ENCODE measurements at regions of chr10 and their contacts with region 1.

Region 1: GRCh38 chr10:86366033-86366901 is at the start of gene GRID1:
- DNase-seq: peak; percentile 48 to 83
- H3K4me3 ChIP-seq: peak within 1 kb of the TSS; percentile 45
- H3K4me1 ChIP-seq: 0 out of 2 replicates have a peak, but pooled peaks cover 2% of the 10 kb centered on the region
- H3K27me3 ChIP-seq: no peaks in the 10 kb centered on the region

Region 2: DNA sequence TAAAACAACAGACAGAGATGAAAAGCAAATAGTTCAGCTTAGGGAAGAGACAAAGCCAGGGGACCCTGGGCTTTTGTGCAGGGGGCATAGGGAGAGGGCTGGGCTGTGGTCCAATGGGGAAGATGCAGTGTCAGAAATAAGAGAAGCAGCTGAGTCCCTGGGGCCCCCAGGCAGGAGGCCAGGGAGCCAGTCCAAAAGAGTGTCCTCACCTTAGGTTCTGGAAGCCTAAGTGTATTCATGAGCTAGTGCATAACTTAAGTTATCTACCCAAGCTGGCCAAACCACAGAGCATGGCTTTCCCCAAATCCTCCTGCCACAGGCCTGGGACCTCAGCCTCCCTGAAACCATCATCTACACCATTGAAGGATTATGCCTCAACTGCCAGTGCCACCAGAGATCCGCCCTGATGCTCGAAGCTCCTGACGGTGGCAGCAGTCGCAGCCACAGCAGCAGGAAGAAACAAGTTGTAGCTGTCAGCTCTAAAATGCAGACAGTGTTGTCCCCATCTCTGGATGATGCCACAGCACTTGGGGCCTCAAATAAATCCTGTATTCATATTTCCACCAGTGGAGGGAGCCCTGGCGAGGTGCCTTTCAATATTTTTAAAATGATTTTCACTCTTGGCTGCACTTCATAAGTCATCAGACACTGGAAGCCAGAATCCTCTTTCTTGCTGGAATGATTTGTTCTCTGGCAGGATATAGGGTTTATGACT is 574.3 kb before region 1 on chr10:
- in situ Hi-C with region 1: loop called (anchors 25 kb)
- DNase-seq: no peak
- H3K4me3 ChIP-seq: no peak overlapping the region
- H3K4me1 ChIP-seq: no peaks in the 10 kb centered on the region
- H3K27me3 ChIP-seq: no peaks in the 10 kb centered on the region

Region 3: GRCh38 chr10:86321568-86321967 is 44.7 kb before region 1 on chr10:
- in situ Hi-C with region 1: no loop called
- DNase-seq: no peak
- H3K4me3 ChIP-seq: no peak overlapping the region
- H3K4me1 ChIP-seq: no peaks in the 10 kb centered on the region
- H3K27me3 ChIP-seq: no peaks in the 10 kb centered on the region

Measured in HAP-1 (cell line).